Right ventricle myocardium inferior (tissue), 1 donor: ENCODE measurements at regions of chr10 and their contacts with region 1.

Region 1: DNA sequence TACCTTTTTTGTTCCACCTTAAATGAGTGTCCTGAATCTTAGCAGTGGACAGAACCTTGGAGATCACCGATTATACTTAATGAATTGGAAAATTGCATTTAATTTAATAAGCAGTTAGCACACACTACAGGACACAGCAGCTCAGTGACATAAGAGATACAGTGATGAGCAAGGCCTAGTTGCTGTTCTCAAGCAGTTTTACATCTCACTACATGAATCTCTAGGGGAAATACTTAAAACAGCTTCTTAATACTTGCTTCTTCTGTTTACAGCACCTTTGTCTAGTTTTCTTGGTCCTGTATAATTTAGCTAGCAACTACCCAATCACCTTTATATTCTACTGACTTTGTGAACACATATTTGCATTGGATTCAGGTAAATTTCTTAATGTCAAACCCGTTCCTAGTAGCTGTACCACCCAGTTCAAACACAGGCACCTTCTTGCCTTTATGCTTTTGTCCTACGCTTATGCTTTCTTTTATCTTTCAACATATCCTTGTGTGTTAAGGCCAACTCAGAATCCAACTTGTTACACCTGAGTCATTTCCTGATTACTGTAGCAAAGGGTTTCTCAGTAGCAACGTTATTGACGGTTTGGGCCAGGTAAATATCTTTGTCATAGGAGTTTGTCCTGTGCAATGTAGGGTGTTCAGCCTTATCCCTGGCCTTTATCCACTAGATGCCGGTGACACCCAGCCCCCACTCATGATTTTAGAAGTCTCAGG is 1.8 kb downstream of the STAM start:
- DNase-seq: no peak
- ATAC-seq: no peak

Region 2: DNA sequence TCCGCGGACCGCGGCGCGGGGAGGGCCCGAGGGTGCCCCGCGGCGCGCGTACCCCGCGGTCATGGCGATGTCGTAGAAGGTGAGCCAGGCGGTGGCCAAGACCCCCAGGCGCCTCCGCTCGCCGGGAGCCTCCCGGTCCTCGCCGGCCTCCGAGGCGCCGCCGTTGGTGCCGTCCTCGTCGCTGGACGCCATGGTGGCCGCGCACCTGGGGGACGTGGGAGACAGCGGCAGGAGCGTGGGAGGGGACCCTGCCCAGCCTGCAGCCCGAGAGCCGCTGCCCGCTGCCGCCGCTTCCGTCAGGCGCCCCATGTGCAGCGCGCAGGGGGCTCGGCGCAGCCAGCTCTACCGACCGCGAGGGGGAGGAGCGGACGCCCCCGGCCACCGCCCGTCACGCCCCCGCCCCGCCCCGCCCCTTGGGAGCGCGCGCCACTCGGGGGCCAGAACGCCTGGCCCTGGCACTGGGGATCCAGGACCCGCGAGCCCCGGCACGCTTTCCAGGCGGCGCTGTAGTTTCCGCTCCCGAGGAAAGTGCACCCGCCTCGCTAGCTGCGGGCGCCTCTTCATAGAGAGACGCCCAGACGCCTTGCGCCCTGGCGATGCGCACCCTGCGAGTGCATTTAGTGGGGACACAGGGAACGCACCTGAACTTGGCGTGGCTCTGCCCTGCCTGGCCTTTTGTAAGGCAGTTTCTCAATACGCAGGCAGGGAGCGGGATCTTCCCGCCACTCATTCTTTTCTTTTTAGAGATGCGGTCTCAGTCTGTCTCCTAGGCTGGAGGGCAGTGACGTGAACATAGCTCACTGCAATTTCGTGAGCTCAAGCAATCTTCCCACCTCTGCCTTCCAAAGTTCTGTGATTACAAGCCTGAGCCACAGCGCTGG is 28.5 kb before region 1 on chr10 and contains the start of gene HACD1:
- intact Hi-C with region 1: no loop called
- DNase-seq: peak; percentile 82
- ATAC-seq: peak; percentile 87
- total RNA-seq, gene HACD1: 157 TPM

Region 3: GRCh38 chr10:17684537-17684936 is 38.8 kb after region 1 on chr10:
- intact Hi-C with region 1: loop called (anchors 5 kb)
- DNase-seq: no peak
- ATAC-seq: no peak